Left colon (tissue), 2 donors: ENCODE measurements at regions of chr11 and their contacts with region 1.

Region 1: DNA sequence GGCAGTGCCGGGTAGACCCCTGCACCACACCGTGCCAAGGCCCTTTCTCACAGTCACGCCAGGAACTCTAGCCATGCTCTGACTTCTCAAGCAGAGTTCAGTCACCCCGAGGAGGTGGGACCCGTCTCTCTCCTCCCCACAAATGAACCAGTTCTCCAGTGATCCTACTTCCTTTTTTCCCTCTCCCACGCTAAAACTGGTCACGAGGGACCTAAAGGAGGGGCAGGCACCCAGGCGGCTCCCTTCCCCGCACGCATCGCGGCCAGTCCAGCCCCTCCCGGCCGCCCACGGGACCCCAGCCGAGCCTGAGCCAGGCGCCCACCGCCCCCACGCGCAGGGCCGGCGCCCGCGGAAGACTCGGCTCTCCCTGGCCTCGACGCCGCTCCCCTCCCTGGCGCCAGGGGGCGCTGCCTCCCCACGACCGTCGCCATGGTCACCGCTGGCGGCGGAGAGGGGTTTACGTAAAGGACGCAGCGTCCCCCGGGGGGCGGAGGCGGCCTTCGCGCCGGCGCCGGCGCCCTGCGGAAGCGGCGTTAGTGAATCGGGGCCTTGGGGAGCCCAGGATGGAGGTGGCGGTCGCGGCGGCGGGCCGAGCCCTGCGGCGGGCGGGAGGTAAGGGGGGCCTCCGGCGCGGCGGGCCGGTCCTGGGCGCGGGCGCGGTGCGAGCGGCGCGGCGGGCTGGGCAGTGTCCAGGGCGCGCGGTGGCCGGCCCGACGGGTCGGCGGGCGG is at the start of gene DAGLA:
- DNase-seq: peak in 1 of 2 donors; percentile 75
- ATAC-seq: peak; percentile 52
- total RNA-seq, gene DAGLA: 10.7 to 12.2 TPM

Region 2: DNA sequence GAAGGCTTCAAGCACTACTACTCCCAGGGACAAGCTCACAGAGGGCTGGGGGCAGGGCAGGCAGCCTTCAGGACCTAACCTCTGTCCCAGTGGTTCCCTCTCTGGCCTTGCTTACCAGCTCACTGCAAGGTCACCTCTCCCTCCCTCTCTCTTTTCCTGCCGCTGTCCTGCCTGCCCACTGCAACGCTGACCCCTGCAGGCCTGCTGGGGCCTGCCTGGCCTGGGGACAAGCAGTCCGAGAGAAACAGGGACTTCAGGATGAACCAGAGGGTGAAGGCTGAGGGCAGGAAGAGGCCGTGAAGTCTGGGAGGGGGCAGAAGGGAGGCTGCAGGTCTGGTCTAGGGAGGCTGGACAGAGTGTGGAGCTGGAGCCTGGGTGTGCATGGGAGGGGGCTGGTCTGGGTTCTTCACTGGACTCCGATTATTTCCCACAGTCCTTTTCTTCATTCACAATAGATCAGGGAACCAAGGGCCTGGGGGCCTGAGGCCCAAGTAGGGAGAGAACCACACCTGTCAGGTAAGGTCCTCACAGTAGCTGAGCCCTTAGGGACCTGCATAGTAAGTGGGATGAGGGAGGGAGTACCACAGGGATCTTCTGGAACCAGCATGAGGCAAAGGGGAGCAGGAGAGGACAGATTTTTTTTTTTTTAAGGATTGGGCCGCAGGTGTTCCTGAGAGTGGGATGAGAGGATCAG is 102.2 kb before region 1 on chr11:
- intact Hi-C with region 1: no loop called
- DNase-seq: no peak
- ATAC-seq: no peak

Region 3: DNA sequence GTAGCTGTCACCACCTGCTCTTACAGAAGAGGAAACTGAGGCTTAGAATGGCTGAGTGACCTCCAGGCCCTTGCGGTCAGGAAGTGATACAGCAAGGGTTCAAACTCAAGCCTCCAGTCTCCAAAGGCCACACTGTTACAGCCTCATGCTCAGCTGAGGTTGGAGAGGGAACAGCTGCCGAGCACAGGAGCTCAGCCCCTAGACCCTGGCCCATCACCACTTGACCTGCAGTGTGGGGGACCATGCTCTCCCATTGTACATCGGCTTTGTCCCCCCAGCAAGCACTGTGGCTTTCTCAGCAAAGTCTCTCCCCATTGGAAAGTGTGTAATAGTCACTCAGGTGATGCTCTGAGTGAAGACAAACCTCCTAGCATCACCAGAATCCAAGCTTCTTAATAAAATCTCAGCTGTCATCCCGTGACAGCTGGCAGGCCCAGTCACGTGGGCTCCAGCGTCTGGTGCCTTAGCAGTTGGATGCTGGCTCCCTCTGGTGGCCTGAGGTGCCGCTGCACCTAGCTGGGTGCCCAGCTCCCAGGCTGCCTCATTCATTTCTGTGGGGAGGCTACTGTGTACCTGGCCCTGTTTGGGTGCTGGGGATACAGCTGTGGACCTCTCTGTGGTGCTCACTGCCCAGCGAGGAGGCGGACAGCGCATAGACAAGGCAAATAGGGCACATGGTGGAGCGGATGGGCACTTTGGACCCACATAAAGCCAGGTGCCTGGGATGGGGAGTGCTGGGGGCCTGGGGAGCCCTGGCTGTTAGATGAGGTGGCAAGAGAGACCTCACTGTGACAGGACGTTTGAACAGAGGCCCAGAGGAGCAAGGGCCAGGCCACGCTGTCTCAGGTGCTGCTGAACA is 53.3 kb after region 1 on chr11:
- intact Hi-C with region 1: loop called in 1 of 2 experiments (anchors 5 kb)
- DNase-seq: peak; percentile 80 to 92
- ATAC-seq: peak; percentile 88

Region 4: GRCh38 chr11:62004473-62004872 is 324.4 kb after region 1 on chr11:
- intact Hi-C with region 1: no loop called
- DNase-seq: peak in 1 of 2 donors; percentile 47
- ATAC-seq: no peak